GM10248 (cell line): ENCODE measurements at regions of chr1 and their contacts with region 1.

Region 1: DNA sequence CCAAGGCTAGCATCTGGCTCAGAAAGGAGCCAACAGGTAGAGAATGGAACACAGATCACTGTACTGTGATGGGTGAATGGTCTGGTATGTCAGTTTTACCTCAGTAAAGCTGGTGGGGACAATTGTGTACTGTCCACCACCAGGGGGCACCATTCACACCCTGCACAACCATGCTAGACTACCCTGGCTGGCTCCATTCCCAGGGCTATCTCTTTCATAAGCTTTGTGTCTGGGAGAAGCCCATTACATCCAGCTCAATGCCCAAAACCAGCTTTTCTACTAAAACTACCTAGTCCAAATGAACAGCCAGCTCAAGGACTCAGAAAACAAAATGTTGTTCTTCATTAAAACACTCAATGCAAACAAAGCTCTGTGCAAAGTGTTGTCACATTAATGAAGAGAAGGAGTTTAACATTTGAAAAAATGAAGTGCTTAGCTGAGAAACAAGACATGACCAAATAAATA is 62.0 kb upstream of the RASAL2 start:
- DNase-seq: peak; percentile 74
- CTCF ChIP-seq: peak; percentile 77

Region 2: DNA sequence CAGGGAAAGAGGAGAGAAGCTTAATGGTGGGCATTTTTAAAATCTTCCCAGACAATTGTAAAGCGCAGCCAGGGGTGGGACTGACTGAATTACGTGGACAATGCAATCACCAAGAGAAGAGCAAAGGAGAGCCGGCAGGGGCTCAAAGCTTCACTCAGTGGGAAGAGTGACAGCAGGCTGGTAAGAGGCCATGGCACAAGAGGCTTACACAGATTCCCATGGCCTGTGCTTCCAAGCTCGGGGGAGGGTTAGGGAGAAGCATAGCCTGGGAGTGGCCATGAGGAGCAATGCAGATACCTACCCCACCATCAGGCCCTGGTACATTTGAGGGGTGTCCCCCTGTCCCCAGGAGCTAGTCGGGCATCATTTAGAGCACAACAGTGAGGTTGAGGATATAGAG is 34.9 kb before region 1 on chr1:
- CTCF ChIA-PET with region 1: interaction called, 11 read pairs
- POLR2A ChIA-PET with region 1: no interaction called
- DNase-seq: no peak
- CTCF ChIP-seq: no peak

Region 3: GRCh38 chr1:178019622-178020021 is 12.3 kb before region 1 on chr1:
- CTCF ChIA-PET with region 1: interaction called, 11 read pairs
- POLR2A ChIA-PET with region 1: no interaction called
- DNase-seq: no peak
- CTCF ChIP-seq: no peak

Region 4: DNA sequence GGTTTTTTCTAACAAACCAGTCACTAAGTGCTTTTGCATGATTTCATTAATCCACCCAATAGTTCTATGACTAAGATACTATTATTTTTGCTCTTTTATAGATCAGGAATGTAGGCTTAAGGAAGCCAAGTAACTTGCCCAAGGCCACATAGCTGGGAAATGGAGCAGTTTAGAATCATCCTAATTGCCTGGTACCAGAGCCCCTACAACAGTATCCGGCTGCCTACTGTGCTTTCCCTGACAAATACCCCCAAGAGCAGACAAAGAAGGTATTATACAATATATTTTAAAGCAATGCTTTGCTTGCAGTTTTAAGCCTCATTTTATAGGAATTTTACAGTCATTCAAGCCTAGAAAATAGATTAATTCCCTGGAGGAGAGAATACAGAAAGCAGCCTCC is 16.5 kb after region 1 on chr1:
- CTCF ChIA-PET with region 1: interaction called, 21 read pairs
- POLR2A ChIA-PET with region 1: no interaction called
- DNase-seq: no peak
- CTCF ChIP-seq: no peak

Region 5: DNA sequence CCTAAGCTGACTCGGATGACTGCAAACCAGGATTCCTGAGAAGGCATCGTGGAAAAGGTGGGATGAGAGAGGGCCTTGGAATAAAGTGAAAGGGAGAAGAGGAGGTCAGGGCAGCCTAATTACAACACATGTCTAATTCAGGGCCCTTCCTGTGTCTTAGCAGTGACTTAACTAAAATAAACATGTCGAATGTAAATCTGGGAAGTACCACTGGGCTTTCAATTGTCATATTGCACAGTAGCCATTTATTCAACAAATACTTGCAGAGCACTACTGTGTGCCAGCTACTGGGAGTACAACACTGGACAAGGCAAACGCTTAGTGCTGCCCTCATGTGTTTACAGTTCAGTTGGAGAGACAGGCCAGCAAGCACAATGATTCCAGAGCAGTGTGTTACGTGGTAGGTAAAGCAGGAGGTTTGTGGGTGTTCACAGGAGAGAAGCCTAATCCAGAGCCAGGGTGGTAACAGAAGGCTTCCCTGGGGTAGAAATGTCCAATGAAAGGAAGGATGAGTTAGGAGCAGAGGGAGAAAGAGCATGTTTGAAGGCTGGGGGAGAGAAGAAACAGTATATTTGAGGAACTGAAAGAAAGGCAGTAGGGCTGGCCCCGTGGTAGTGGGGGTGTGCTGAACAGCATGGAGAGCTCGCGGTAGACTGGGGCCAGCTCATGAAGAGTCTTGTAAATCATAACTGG is 24.0 kb after region 1 on chr1:
- CTCF ChIA-PET with region 1: interaction called, 21 read pairs
- POLR2A ChIA-PET with region 1: no interaction called
- DNase-seq: peak; percentile 69
- CTCF ChIP-seq: peak; percentile 24

Region 6: GRCh38 chr1:178189814-178190213 is 157.9 kb after region 1 on chr1:
- CTCF ChIA-PET with region 1: interaction called, 85 read pairs
- POLR2A ChIA-PET with region 1: no interaction called
- DNase-seq: peak; percentile 26
- CTCF ChIP-seq: peak; percentile 61